B cell (primary cell): ENCODE measurements at regions of chr7 and their contacts with region 1.

Region 1: DNA sequence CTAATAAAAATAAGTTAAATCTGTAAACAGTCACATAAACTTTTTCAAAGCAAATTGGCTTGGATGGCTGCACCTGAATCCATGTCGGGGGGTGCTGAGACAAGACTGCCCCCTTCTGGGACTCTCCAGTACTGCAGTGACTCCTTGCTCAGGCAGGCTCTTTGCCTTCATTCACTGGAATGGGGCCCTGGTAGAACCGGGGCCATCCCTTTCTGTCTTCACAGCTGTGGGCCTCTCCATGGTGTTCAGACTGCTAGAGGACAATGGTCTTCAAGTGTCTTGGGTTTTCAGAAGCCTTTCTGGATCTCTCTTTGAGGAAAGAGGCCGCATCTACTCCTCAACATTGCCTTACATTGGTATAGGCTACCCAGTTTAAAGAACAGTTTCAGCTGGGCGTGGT is 16.1 kb upstream of the IMPDH1 start:
- DNase-seq: peak; percentile 71
- ATAC-seq: peak; percentile 69
- H3K4me3 ChIP-seq: no peak overlapping the region
- H3K4me3 Mint-ChIP-seq: no peak overlapping the region
- H3K27ac ChIP-seq: no peak overlapping the region
- H3K27ac Mint-ChIP-seq: no peak overlapping the region
- H3K4me1 ChIP-seq: no peaks in the 10 kb centered on the region
- H3K4me1 Mint-ChIP-seq: no peaks in the 10 kb centered on the region
- H3K27me3 ChIP-seq: no peaks in the 10 kb centered on the region
- H3K27me3 Mint-ChIP-seq: no peaks in the 10 kb centered on the region
- CTCF ChIP-seq: peak; percentile 76

Region 2: DNA sequence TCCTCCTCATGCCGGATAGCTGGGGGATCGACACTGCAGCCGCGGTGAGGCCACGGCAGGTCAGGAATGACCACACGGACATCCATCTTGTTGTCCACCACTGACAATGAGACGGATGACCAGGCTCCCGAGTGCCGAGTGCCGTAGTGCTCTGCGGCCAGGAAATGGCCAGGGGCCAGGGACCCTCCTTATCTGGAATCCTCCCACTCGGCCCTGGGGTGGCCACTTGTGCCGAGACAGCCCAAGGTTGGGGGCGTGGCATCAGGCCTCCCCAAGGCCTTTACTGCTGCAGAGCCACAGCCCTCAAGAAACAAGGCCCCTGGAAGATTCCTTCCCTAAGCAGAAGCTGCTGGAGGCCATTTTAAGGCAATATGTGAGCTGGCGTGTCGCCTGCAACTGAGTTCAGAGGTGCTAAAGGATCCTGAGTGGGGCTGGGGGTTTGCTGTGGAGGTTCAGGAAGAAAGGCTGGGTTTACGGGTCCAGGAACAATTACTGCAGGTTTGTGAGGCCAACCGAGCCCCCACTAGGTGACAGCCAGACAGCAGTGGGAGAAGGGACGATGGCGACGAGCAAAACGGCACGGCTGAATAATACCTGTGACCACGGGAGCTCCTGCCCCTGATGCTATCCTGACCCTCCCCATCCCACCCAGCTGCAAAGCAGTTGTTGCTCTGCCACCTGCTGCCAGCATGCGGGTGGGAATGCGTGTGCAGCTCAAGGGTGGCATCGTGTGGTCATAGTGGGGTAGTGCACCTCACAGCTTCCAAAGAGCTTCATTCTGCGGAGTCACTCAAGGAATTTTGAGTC is 216.4 kb before region 1 on chr7:
- CTCF ChIA-PET with region 1: no interaction called
- POLR2A ChIA-PET with region 1: no interaction called
- intact Hi-C with region 1: no loop called
- DNase-seq: peak; percentile 85
- ATAC-seq: peak; percentile 88
- H3K4me3 ChIP-seq: no peak overlapping the region
- H3K4me3 Mint-ChIP-seq: no peak overlapping the region
- H3K27ac ChIP-seq: no peak overlapping the region
- H3K27ac Mint-ChIP-seq: no peak overlapping the region
- H3K4me1 ChIP-seq: peaks cover 0 to 7% of the 10 kb centered on the region in 2 donors
- H3K4me1 Mint-ChIP-seq: no peaks in the 10 kb centered on the region
- H3K27me3 ChIP-seq: peaks cover 0 to 4% (median 1%) of the 10 kb centered on the region in 4 experiments
- H3K27me3 Mint-ChIP-seq: peaks cover 19% of the 10 kb centered on the region
- CTCF ChIP-seq: peak; percentile 94

Region 3: DNA sequence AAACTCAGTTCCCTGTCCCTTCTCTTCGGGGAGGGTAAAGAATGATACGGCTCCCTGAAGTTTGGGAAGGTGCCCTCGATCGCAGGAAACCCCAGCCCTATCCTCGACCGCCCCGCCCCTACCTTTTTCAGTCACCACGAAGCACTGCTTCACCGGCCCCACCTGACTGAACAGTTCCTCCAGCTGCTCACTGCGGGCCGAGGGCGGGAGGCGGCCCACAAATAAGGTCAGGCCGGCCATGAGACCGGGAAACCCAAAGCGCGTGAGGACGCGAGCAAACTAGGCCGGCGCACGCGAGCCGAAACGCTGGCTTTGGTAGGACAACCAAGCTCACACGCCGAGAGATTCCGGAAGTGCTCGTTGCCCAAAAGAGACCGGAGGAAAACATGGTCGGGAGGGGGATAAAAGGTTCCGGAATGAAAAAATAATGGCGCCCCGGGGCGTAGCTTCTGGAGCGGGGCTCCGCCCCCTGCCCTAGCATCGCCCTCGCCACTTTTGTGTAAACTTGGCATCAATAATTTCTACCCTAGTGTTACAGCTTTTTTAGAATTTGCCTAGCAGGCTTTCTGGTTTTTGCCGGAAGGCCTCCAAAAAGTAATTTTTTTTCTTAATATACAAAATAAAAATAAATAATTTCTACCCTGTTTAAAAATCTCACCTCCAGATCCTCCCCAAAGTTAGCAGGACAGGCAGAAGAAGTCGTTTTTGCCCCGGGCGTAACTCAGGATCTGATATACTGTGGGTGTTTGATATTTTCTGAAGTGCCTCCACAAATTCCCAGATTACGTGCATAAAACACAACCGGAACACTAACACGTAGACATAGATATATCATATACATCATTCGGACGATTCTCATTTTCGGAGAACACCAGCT is 82.1 kb before region 1 on chr7 and contains the start of gene RBM28:
- CTCF ChIA-PET with region 1: interaction called, 12 read pairs
- POLR2A ChIA-PET with region 1: no interaction called
- intact Hi-C with region 1: no loop called
- DNase-seq: peak; percentile 95
- ATAC-seq: peak; percentile 95
- H3K4me3 ChIP-seq: peak within 1 kb of the TSS; percentile 75 to 91 (median 81)
- H3K4me3 Mint-ChIP-seq: peak within 1 kb of the TSS; percentile 98
- H3K27ac ChIP-seq: peak within 1 kb of the TSS; percentile 71 to 76
- H3K27ac Mint-ChIP-seq: peak within 1 kb of the TSS; percentile 96
- H3K4me1 ChIP-seq: peaks cover 15 to 19% of the 10 kb centered on the region in 2 donors
- H3K4me1 Mint-ChIP-seq: peaks cover 28% of the 10 kb centered on the region
- H3K27me3 ChIP-seq: peaks cover 0 to 11% (median 1%) of the 10 kb centered on the region in 4 experiments
- H3K27me3 Mint-ChIP-seq: peaks cover 14% of the 10 kb centered on the region
- CTCF ChIP-seq: no peak
- total RNA-seq, gene RBM28: 46.2 and 52.8 TPM in 2 replicates

Region 4: DNA sequence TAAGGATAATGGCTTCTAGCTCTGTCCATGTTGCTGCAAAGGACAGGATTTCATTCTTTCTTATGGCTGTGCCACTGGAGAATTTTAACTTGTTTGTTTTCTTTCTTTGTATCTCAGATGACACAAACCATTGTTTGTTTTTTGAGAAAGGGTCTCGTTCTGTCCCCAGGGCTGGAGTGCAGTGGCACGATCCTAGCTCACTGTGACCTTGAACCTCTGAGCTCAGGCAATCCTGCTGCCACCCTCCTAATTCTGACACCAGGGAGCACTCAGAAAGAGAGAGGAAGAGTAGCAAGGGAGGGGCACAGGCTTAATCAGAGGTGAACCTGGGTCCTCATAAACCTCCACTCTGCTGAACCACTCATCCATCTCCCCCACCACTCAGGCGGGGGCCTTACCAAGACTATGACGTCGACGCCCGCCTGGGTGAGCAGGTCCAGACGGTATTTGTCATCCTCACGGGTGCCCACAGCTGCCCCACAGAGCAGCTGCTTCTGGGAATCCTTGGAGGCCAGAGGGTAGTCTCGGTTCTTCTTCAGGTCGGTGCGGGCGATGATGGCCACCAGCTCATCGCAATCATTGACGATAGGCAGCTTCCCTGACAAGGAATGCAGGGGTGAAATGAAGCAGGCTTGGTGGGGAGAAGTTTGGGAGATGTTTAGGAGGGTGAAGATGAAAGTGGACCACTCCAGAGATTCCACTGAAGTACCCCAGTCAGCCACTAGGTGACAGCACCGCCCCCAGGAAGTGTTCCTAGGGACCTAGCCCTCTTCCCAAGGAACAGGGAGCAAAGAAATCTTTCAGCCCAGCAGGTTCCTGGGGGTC is 27.6 kb before region 1 on chr7:
- CTCF ChIA-PET with region 1: interaction called, 331 read pairs
- POLR2A ChIA-PET with region 1: no interaction called
- intact Hi-C with region 1: loop called (anchors 1 kb)
- DNase-seq: peak; percentile 57
- ATAC-seq: peak; percentile 65
- H3K4me3 ChIP-seq: no peak overlapping the region
- H3K4me3 Mint-ChIP-seq: no peak overlapping the region
- H3K27ac ChIP-seq: no peak overlapping the region
- H3K27ac Mint-ChIP-seq: no peak overlapping the region
- H3K4me1 ChIP-seq: no peaks in the 10 kb centered on the region
- H3K4me1 Mint-ChIP-seq: no peaks in the 10 kb centered on the region
- H3K27me3 ChIP-seq: no peaks in the 10 kb centered on the region
- H3K27me3 Mint-ChIP-seq: no peaks in the 10 kb centered on the region
- CTCF ChIP-seq: peak; percentile 88

Region 5: GRCh38 chr7:128437426-128438332 is 11.8 kb after region 1 on chr7:
- CTCF ChIA-PET with region 1: interaction called, 133 read pairs
- POLR2A ChIA-PET with region 1: no interaction called
- intact Hi-C with region 1: no loop called
- DNase-seq: peak; percentile 68
- ATAC-seq: peak; percentile 93
- H3K4me3 ChIP-seq: peak overlapping the region in 4 of 5 experiments; percentile 11 to 55 (median 38)
- H3K4me3 Mint-ChIP-seq: peak overlapping the region; percentile 65
- H3K27ac ChIP-seq: peak overlapping the region; percentile 60 to 65
- H3K27ac Mint-ChIP-seq: peak overlapping the region; percentile 87
- H3K4me1 ChIP-seq: peaks cover 19 to 24% of the 10 kb centered on the region in 2 donors
- H3K4me1 Mint-ChIP-seq: peaks cover 23% of the 10 kb centered on the region
- H3K27me3 ChIP-seq: no peaks in the 10 kb centered on the region
- H3K27me3 Mint-ChIP-seq: no peaks in the 10 kb centered on the region
- CTCF ChIP-seq: no peak

Region 6: GRCh38 chr7:128883622-128884501 is 458.0 kb after region 1 on chr7:
- CTCF ChIA-PET with region 1: interaction called, 13 read pairs
- POLR2A ChIA-PET with region 1: no interaction called
- intact Hi-C with region 1: no loop called
- DNase-seq: peak; percentile 87
- ATAC-seq: peak; percentile 88
- H3K4me3 ChIP-seq: peak overlapping the region in 4 of 5 experiments; percentile 33 to 59 (median 40)
- H3K4me3 Mint-ChIP-seq: peak overlapping the region; percentile 44
- H3K27ac ChIP-seq: no peak overlapping the region
- H3K27ac Mint-ChIP-seq: peak overlapping the region; percentile 53
- H3K4me1 ChIP-seq: peaks cover 0 to 6% of the 10 kb centered on the region in 2 donors
- H3K4me1 Mint-ChIP-seq: peaks cover 3% of the 10 kb centered on the region
- H3K27me3 ChIP-seq: peaks cover 0 to 18% (median 3%) of the 10 kb centered on the region in 4 experiments
- H3K27me3 Mint-ChIP-seq: peaks cover 4% of the 10 kb centered on the region
- CTCF ChIP-seq: peak; percentile 97